ENCODE measurements at regions of chr1 and their contacts with region 1.

Region 1: GRCh38 chr1:25805863-25806225 is 5.9 kb downstream of the SELENON start:
- DNase-seq: no peak
- H3K4me3 ChIP-seq: no peak overlapping the region
- H3K27ac ChIP-seq: peak overlapping the region; percentile 0 to 22
- H3K4me1 ChIP-seq: peaks cover 30% of the 10 kb centered on the region
- H3K27me3 ChIP-seq: no peaks in the 10 kb centered on the region
- CTCF ChIP-seq: no peak
- POLR2A ChIP-seq: no peak

Region 2: DNA sequence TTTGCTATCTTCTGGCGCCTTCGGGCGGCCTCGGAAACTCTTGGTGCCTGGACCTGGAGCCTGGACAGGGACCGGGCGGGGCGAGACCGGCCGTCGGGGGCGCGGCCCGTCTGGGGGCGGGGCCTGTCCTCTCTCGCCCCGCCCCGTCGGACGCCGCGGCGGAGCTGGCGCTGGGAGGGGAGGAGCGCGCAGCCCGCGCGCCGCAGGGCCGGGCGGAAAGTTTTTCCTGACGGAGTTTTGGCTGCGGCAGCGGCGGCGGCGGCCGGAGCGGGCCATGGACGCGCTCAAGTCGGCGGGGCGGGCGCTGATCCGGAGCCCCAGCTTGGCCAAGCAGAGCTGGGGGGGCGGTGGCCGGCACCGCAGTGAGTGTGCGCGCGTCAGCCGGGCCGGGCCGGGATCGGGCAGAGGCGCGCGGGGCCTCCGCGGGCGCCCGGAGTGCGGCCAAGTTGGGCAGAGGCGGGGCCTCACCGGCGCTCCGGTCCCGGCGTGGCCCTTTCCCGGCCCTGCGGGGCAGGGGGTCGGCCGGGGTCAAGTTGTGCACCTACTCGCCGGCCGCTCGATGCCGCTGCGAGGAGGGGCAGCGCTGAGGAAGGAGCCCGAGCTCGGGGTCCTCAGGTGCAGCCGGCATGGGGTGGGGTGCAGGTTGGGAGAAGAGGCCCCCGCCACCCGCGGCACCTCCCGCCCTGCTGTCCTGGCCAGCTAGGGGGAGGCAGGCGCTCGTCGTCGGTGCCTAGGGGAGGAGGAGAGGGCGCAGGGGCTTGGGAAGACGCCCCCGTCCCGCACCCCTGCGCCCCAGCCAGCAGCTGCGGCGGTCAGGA is 262.2 kb before region 1 on chr1 and contains the start of gene LDLRAP1:
- intact Hi-C with region 1: loop called (anchors 5 kb)
- DNase-seq: peak; percentile 76
- H3K4me3 ChIP-seq: peak within 1 kb of the TSS; percentile 80
- H3K27ac ChIP-seq: peak within 1 kb of the TSS; percentile 72 to 89
- H3K4me1 ChIP-seq: no peaks in the 10 kb centered on the region
- H3K27me3 ChIP-seq: no peaks in the 10 kb centered on the region
- CTCF ChIP-seq: peak in 1 of 4 experiments; percentile 2
- POLR2A ChIP-seq: peak; percentile 95
- total RNA-seq, gene LDLRAP1: 37.8 to 56.3 TPM

Region 3: DNA sequence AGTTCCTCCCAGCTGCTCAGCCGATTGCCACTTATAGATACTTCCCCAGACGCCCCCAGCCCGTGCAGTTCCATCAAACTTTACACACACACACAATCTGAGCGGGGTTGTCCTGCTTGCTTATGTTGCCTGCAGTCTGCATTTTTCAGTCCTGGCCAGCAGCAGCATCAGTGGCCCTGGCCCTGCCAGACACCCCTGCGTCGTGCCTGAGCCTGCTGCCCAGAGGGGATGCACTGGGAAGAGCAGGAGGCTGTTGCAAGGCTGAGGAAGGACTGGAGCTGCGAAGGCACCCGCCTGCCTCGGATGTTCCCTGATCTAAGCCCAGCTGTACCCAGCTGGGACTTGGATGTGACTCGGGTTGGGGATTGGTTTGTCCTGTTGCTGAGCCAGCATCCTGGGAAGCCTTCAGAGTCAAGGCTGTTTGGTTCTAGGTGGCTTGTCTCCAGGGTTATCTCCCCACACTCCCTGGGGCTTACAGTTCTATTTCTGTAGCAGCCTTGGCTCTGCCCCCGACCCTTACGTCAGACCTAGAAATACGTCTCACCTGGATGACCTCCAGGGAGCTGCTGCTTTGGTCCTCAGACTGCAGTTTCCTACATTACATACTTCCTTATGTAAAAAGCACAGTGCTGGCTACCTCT is 146.9 kb before region 1 on chr1:
- intact Hi-C with region 1: no loop called
- DNase-seq: peak; percentile 49
- H3K4me3 ChIP-seq: no peak overlapping the region
- H3K27ac ChIP-seq: peak overlapping the region; percentile 50 to 52
- H3K4me1 ChIP-seq: peaks cover 5% of the 10 kb centered on the region
- H3K27me3 ChIP-seq: no peaks in the 10 kb centered on the region
- CTCF ChIP-seq: no peak
- POLR2A ChIP-seq: no peak

Region 4: GRCh38 chr1:25675729-25676476 is 129.9 kb before region 1 on chr1:
- intact Hi-C with region 1: no loop called
- DNase-seq: no peak
- H3K4me3 ChIP-seq: no peak overlapping the region
- H3K27ac ChIP-seq: no peak overlapping the region
- H3K4me1 ChIP-seq: no peaks in the 10 kb centered on the region
- H3K27me3 ChIP-seq: no peaks in the 10 kb centered on the region
- CTCF ChIP-seq: no peak
- POLR2A ChIP-seq: no peak